Caco-2 (cell line): ENCODE measurements at regions of chr18 and their contacts with region 1.

Region 1: GRCh38 chr18:49728542-49728941 is 84.8 kb downstream of the ACAA2 start:
- DNase-seq: peak; percentile 35 to 46
- H3K4me3 ChIP-seq: no peak overlapping the region
- H3K4me3 Mint-ChIP-seq: no peak overlapping the region
- H3K27ac Mint-ChIP-seq: peak overlapping the region; percentile 97
- H3K4me1 ChIP-seq: peaks cover 82% of the 10 kb centered on the region
- H3K4me1 Mint-ChIP-seq: peaks cover 20% of the 10 kb centered on the region
- H3K27me3 ChIP-seq: no peaks in the 10 kb centered on the region
- H3K27me3 Mint-ChIP-seq: no peaks in the 10 kb centered on the region
- CTCF ChIP-seq: peak; percentile 20 to 22

Region 2: DNA sequence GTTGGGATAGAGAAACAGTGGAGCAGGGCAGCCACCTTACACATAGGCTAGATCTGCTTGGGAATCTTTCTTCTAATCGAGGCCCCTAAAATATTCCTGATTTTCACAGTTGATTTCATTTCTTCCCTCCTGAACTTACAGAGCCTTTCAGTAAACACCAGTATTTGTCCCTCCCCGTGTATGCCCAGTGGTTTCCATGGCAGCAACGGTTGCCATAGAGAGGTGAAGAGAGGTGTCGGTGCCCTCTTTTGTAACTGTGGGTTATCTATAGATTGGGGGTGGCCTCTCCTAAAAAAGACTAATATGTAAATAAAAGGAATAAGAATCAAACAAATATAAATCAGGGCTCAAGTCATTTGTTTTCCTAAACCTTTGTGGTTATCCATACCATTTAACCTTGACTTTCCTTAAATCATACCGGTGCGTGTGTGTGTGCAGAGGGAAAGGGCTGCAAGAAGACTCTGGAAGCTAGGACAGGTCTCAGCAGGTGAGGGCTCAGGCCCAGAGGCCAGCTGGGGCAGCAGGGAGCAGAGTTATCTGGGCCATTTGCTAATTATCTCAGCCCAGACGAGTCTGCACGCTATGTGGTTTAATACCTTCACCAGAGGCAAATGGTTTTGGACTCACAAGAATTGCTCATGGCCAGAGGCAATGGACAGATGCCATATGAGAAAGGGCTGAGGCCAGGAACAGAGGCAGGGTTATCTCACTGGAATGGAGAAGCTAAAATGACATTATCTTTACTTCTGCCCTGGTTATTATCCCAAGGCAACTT is 131.2 kb before region 1 on chr18:
- CTCF ChIA-PET with region 1: no interaction called
- POLR2A ChIA-PET with region 1: no interaction called
- intact Hi-C with region 1: loop called (anchors 10 kb)
- DNase-seq: peak; percentile 7 to 47
- H3K4me3 ChIP-seq: no peak overlapping the region
- H3K4me3 Mint-ChIP-seq: no peak overlapping the region
- H3K27ac Mint-ChIP-seq: no peak overlapping the region
- H3K4me1 ChIP-seq: peaks cover 4% of the 10 kb centered on the region; the same call in 1 of the 2 replicates
- H3K4me1 Mint-ChIP-seq: peaks cover 6% of the 10 kb centered on the region
- H3K27me3 ChIP-seq: no peaks in the 10 kb centered on the region
- H3K27me3 Mint-ChIP-seq: no peaks in the 10 kb centered on the region
- CTCF ChIP-seq: no peak

Region 3: GRCh38 chr18:49656073-49656591 is 72.4 kb before region 1 on chr18:
- CTCF ChIA-PET with region 1: no interaction called
- POLR2A ChIA-PET with region 1: interaction called, 6 read pairs
- intact Hi-C with region 1: loop called (anchors 1 kb)
- DNase-seq: peak in 1 of 2 experiments; percentile 19
- H3K4me3 ChIP-seq: no peak overlapping the region
- H3K4me3 Mint-ChIP-seq: no peak overlapping the region
- H3K27ac Mint-ChIP-seq: no peak overlapping the region
- H3K4me1 ChIP-seq: peaks cover 27% of the 10 kb centered on the region
- H3K4me1 Mint-ChIP-seq: peaks cover 22% of the 10 kb centered on the region
- H3K27me3 ChIP-seq: no peaks in the 10 kb centered on the region
- H3K27me3 Mint-ChIP-seq: no peaks in the 10 kb centered on the region
- CTCF ChIP-seq: no peak

Region 4: DNA sequence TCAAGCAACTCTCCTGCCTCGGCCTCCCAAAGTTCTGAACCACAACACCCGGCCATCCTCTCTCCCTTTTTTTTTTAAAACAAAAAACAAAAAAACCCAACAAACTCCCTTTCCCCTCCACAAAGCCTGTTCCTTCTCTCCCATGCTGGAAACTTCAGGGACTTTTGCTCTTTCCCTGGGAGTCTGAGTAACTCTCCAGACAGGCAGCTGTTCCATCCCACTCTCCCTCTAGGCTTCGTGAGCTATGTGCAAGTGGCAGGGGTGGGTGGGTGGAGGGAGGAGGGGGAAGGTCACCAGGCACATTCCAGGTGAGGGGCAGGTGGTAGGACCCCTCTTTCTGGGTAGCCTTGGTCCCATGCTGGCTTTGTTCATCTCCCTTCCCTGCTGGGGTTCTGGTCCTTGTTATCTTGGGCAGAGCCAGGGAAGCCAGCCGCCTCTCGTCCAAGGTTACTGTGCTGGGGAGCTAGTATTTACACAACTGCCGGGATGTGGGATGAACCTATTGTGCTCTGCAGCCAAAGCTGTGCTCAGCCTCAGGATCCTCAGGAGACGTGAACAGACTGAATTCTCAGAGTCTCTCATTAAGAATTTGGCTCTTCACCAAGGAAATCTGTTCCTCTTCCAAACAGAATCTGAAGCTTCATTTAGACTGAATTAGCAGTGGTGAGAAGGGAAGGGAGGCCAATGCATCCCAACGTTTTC is 59.8 kb before region 1 on chr18:
- CTCF ChIA-PET with region 1: no interaction called
- POLR2A ChIA-PET with region 1: no interaction called
- intact Hi-C with region 1: no loop called
- DNase-seq: no peak
- H3K4me3 ChIP-seq: no peak overlapping the region
- H3K4me3 Mint-ChIP-seq: no peak overlapping the region
- H3K27ac Mint-ChIP-seq: peak overlapping the region; percentile 67
- H3K4me1 ChIP-seq: no peaks in the 10 kb centered on the region
- H3K4me1 Mint-ChIP-seq: peaks cover 3% of the 10 kb centered on the region
- H3K27me3 ChIP-seq: no peaks in the 10 kb centered on the region
- H3K27me3 Mint-ChIP-seq: no peaks in the 10 kb centered on the region
- CTCF ChIP-seq: no peak

Region 5: DNA sequence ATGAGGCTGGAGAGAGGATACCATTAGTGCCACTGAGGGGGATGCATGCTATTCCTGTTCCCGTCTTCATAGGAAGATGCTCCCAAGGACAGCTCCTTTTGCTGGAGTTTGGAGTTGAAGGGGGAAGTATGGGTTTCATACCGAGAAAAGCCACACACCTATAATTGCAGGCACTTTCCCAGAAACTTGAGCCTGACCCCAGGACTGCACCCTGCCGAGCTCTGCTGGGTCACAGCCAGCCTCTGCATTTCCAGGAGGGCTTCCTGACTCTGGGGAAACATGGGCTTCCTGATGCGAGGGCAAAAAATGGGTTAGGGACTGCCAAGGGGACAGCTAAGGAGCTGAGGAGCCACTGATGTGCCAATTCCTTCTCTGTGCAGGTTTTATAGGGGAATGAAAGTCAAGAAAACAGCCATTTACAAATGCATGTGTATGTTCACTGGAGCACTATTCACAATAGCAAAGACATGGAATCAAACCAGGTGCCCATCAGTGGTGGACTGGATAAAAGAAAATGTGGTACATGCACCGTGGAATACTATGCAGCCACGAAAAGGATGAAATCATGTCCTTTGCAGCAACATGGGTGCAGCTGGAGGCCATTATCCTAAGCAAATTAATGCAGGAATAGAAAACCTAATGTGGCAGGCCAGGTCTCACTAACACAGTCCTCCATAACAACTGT is 19.7 kb before region 1 on chr18:
- CTCF ChIA-PET with region 1: no interaction called
- POLR2A ChIA-PET with region 1: no interaction called
- intact Hi-C with region 1: loop called (anchors 1 kb)
- DNase-seq: no peak
- H3K4me3 ChIP-seq: no peak overlapping the region
- H3K4me3 Mint-ChIP-seq: no peak overlapping the region
- H3K27ac Mint-ChIP-seq: peak overlapping the region; percentile 71
- H3K4me1 ChIP-seq: peaks cover 18% of the 10 kb centered on the region
- H3K4me1 Mint-ChIP-seq: peaks cover 7% of the 10 kb centered on the region
- H3K27me3 ChIP-seq: no peaks in the 10 kb centered on the region
- H3K27me3 Mint-ChIP-seq: no peaks in the 10 kb centered on the region
- CTCF ChIP-seq: no peak

Region 6: DNA sequence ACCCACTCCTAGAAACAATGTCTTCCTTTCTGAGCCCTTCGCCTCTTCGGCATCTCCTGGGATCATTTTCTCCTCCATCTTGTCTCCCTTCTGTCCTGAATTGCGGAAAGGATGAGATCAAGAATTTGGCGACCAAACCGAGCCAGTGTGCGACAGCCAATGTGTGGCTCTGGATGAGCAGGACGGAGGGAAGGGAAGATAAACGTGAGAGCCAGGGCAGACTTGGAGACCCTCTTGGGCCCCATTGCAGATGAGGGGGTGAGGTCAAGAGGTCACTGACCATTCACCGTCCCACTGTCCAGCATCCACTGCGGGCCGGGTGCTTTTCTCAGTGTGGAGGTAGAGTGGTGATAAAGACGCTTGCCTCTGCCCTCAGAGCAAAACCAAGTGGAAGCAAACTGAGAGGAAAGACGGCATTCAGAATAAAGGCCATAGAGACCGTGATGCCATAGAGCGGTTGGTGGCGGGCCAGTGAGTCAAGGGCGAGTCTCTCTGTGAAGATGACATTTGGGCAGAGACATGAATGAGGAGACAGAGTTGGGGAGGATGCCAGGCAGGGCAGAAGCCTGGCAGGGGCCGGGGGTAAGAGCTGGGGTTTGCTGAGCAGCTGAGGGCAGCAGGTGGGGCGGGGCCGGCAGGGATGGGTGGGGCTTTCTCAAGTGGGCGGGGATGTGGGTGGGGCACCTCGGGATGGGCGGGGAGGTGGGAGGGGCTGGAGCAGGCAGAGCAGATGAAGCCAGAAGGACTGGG is 29.1 kb after region 1 on chr18:
- CTCF ChIA-PET with region 1: no interaction called
- POLR2A ChIA-PET with region 1: no interaction called
- intact Hi-C with region 1: no loop called
- DNase-seq: no peak
- H3K4me3 ChIP-seq: no peak overlapping the region
- H3K4me3 Mint-ChIP-seq: no peak overlapping the region
- H3K27ac Mint-ChIP-seq: peak overlapping the region; percentile 50
- H3K4me1 ChIP-seq: no peaks in the 10 kb centered on the region
- H3K4me1 Mint-ChIP-seq: no peaks in the 10 kb centered on the region
- H3K27me3 ChIP-seq: no peaks in the 10 kb centered on the region
- H3K27me3 Mint-ChIP-seq: no peaks in the 10 kb centered on the region
- CTCF ChIP-seq: no peak

Region 7: GRCh38 chr18:49813319-49814146 is 85.0 kb after region 1 on chr18 and contains the start of gene ACAA2:
- CTCF ChIA-PET with region 1: no interaction called
- POLR2A ChIA-PET with region 1: interaction called, 13 read pairs
- intact Hi-C with region 1: no loop called
- DNase-seq: peak; percentile 70 to 78
- H3K4me3 ChIP-seq: peak within 1 kb of the TSS; percentile 78
- H3K4me3 Mint-ChIP-seq: peak within 1 kb of the TSS; percentile 85
- H3K27ac Mint-ChIP-seq: peak within 1 kb of the TSS; percentile 89
- H3K4me1 ChIP-seq: peaks cover 20% of the 10 kb centered on the region
- H3K4me1 Mint-ChIP-seq: peaks cover 34% of the 10 kb centered on the region
- H3K27me3 ChIP-seq: no peaks in the 10 kb centered on the region
- H3K27me3 Mint-ChIP-seq: no peaks in the 10 kb centered on the region
- CTCF ChIP-seq: no peak
- total RNA-seq, gene ACAA2: 188 and 207 TPM in 2 replicates

Region 8: DNA sequence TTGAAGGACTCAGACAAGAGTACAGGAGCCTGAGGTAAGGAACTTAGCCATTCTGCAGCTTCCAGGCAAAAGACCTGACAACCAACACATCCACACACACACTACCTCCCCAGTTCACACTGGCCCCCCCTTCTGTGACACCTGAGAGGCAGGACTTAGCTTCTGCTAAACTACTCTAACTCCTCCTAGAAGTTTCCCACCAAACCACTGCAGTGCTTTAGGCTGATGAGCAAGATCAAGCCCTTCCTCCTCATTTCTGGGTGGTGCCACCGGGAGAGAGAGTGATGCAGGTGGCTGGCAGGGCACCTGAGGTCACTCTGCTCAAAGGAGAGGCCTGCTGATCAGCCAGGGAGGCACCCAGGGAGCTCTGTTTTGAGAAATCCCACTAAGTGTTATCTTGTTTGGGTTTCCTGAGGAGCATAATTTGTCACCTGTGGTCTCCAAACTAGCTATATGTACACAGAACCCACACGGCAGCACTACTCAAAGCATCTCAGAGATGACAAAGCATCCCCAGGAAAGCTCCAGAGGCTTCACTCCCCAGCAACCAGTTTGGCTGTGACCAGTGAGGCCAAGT is 278.0 kb after region 1 on chr18:
- CTCF ChIA-PET with region 1: no interaction called
- POLR2A ChIA-PET with region 1: no interaction called
- intact Hi-C with region 1: no loop called
- DNase-seq: no peak
- H3K4me3 ChIP-seq: no peak overlapping the region
- H3K4me3 Mint-ChIP-seq: no peak overlapping the region
- H3K27ac Mint-ChIP-seq: no peak overlapping the region
- H3K4me1 ChIP-seq: no peaks in the 10 kb centered on the region; the same call in 1 of the 2 replicates
- H3K4me1 Mint-ChIP-seq: peaks cover 3% of the 10 kb centered on the region
- H3K27me3 ChIP-seq: no peaks in the 10 kb centered on the region
- H3K27me3 Mint-ChIP-seq: no peaks in the 10 kb centered on the region
- CTCF ChIP-seq: no peak